ENCODE measurements at regions of chr2 and their contacts with region 1.

Region 1: DNA sequence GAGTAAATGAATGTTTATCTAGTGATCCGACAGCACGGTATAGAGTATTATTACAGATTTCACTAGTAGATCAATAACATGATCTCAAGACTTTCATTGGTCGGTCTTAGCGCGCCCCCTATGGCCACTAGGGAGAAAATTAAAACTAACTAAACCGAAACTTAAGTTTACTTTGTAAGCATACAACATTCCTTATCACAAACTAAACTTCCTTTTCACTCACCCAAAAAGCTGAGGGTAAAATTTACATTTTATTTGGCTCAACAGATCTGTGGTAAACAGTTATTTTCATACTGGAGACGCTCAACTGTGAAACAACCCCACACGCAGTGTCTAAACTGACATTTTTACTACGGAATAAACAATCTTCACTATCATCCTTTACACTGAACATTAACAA is 215.6 kb upstream of the MAP2 start:
- DNase-seq: peak; percentile 44 to 45
- H3K4me3 ChIP-seq: no peak overlapping the region
- H3K4me3 Mint-ChIP-seq: no peak overlapping the region
- H3K27ac Mint-ChIP-seq: no peak overlapping the region
- H3K4me1 ChIP-seq: no peaks in the 10 kb centered on the region
- H3K4me1 Mint-ChIP-seq: no peaks in the 10 kb centered on the region
- H3K27me3 ChIP-seq: no peaks in the 10 kb centered on the region
- H3K27me3 Mint-ChIP-seq: peaks cover 3% of the 10 kb centered on the region
- CTCF ChIP-seq: peak; percentile 57 to 65

Region 2: GRCh38 chr2:208373460-208374089 is 834.6 kb before region 1 on chr2:
- CTCF ChIA-PET with region 1: no interaction called
- POLR2A ChIA-PET with region 1: no interaction called
- intact Hi-C with region 1: loop called (anchors 1 kb)
- DNase-seq: peak in 1 of 2 experiments; percentile 55
- H3K4me3 ChIP-seq: no peak overlapping the region
- H3K4me3 Mint-ChIP-seq: no peak overlapping the region
- H3K27ac Mint-ChIP-seq: no peak overlapping the region
- H3K4me1 ChIP-seq: no peaks in the 10 kb centered on the region
- H3K4me1 Mint-ChIP-seq: no peaks in the 10 kb centered on the region
- H3K27me3 ChIP-seq: no peaks in the 10 kb centered on the region
- H3K27me3 Mint-ChIP-seq: no peaks in the 10 kb centered on the region
- CTCF ChIP-seq: peak; percentile 81

Region 3: DNA sequence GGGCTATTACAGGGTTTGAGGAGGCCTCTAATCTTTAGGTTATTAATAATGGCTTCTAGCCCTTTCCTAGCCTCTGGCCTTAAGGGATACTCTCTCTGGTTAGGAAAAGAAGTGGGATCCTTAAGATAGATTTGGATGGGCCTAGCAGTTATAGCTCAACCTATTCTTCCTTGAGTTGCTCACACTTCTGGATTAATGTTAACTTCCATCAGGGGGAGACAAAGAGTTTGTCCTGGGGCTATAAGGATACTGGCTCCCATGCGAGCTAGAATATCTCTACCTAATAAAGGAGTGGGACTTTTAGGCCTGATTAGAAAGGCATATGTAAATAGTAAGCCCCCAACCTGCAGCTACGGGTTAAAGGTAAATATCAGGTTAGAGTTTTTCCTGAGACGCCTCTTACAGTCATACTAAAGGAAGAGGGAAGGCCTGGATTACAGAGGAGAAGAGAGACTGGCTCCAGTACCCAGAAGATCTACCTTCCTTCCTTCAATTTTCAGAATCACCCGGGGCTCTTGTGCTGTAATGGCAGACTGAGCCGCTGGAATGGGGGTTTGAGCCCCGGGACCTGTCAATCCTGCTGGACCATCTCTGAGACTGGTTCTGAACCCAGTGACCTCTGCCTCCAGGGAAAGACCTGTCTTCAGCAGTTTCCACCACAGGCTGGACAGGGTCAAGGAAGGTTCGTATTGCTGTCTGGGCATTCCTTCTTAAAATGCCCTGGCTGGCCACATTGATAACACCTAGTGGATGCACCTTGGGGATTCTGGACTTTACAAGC is 815.7 kb before region 1 on chr2:
- CTCF ChIA-PET with region 1: no interaction called
- POLR2A ChIA-PET with region 1: no interaction called
- intact Hi-C with region 1: loop called (anchors 1 kb)
- DNase-seq: no peak
- H3K4me3 ChIP-seq: no peak overlapping the region
- H3K4me3 Mint-ChIP-seq: no peak overlapping the region
- H3K27ac Mint-ChIP-seq: no peak overlapping the region
- H3K4me1 ChIP-seq: no peaks in the 10 kb centered on the region
- H3K4me1 Mint-ChIP-seq: no peaks in the 10 kb centered on the region
- H3K27me3 ChIP-seq: no peaks in the 10 kb centered on the region
- H3K27me3 Mint-ChIP-seq: peaks cover 3% of the 10 kb centered on the region
- CTCF ChIP-seq: no peak

Region 4: GRCh38 chr2:208407667-208408066 is 800.5 kb before region 1 on chr2:
- CTCF ChIA-PET with region 1: no interaction called
- POLR2A ChIA-PET with region 1: no interaction called
- intact Hi-C with region 1: loop called (anchors 1 kb)
- DNase-seq: peak in 1 of 2 experiments; percentile 32
- H3K4me3 ChIP-seq: no peak overlapping the region
- H3K4me3 Mint-ChIP-seq: no peak overlapping the region
- H3K27ac Mint-ChIP-seq: no peak overlapping the region
- H3K4me1 ChIP-seq: no peaks in the 10 kb centered on the region
- H3K4me1 Mint-ChIP-seq: no peaks in the 10 kb centered on the region
- H3K27me3 ChIP-seq: no peaks in the 10 kb centered on the region
- H3K27me3 Mint-ChIP-seq: peaks cover 4% of the 10 kb centered on the region
- CTCF ChIP-seq: peak; percentile 25

Region 5: GRCh38 chr2:208595386-208596275 is 612.6 kb before region 1 on chr2:
- CTCF ChIA-PET with region 1: no interaction called
- POLR2A ChIA-PET with region 1: no interaction called
- intact Hi-C with region 1: loop called (anchors 1 kb)
- DNase-seq: peak; percentile 72 to 77
- H3K4me3 ChIP-seq: no peak overlapping the region
- H3K4me3 Mint-ChIP-seq: peak overlapping the region; percentile 65
- H3K27ac Mint-ChIP-seq: peak overlapping the region; percentile 92
- H3K4me1 ChIP-seq: peaks cover 22% of the 10 kb centered on the region
- H3K4me1 Mint-ChIP-seq: peaks cover 18% of the 10 kb centered on the region
- H3K27me3 ChIP-seq: no peaks in the 10 kb centered on the region
- H3K27me3 Mint-ChIP-seq: no peaks in the 10 kb centered on the region
- CTCF ChIP-seq: peak; percentile 32 to 51

Region 6: DNA sequence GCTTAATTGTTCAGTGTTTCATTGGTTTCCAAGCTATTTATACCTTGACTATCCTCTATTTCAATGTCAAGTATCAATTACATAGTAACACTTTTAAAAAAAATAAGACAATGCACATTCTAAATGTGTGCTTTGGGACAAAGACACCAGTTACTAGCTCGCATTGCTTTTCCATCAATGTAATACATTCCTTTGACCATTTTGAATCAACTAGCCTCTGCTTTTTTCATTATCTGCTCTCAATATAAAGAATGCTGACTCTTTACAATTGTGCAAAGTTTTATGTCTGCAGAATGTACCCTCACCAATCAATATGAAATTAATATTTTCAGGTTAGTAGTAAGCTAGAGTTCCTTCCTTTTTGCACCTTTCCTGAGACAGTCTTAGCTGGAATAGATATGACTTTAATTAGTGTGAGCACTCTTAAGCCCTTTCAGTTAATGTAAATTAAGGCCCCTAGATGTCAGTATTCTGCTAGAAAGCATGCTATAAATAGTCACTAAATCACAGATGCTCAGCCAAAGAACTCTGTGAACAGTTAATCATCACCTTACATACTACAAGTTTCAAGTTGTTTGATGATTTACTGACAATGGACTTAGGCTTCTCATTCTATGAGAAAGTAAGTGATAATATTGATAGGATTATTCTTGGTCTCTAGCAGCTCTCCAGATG is 388.1 kb before region 1 on chr2:
- CTCF ChIA-PET with region 1: interaction called, 5 read pairs
- POLR2A ChIA-PET with region 1: no interaction called
- intact Hi-C with region 1: loop called (anchors 1 kb)
- DNase-seq: peak in 1 of 2 experiments; percentile 13
- H3K4me3 ChIP-seq: no peak overlapping the region
- H3K4me3 Mint-ChIP-seq: no peak overlapping the region
- H3K27ac Mint-ChIP-seq: no peak overlapping the region
- H3K4me1 ChIP-seq: no peaks in the 10 kb centered on the region
- H3K4me1 Mint-ChIP-seq: no peaks in the 10 kb centered on the region
- H3K27me3 ChIP-seq: no peaks in the 10 kb centered on the region
- H3K27me3 Mint-ChIP-seq: no peaks in the 10 kb centered on the region
- CTCF ChIP-seq: peak; percentile 27 to 39

Region 7: DNA sequence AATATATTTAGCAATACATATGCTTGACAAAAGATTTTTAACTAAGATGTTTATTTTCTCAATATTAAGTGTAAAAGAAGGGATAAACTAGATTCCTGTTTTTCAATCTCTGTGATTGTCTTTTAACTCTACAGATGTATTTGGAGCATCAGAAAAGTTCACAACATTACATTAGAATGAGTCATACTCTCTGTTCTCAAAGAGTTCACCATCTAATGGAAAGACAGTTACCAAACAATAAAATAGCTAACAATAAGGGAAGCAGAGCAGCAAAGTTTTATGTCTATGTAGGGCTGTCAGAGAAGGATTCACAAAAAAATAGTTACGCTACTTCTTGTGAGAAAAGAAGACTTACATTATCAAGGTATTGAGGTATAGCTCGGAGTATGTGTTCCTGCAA is 106.4 kb after region 1 on chr2:
- CTCF ChIA-PET with region 1: no interaction called
- POLR2A ChIA-PET with region 1: no interaction called
- intact Hi-C with region 1: no loop called
- DNase-seq: no peak
- H3K4me3 ChIP-seq: no peak overlapping the region
- H3K4me3 Mint-ChIP-seq: no peak overlapping the region
- H3K27ac Mint-ChIP-seq: no peak overlapping the region
- H3K4me1 ChIP-seq: no peaks in the 10 kb centered on the region
- H3K4me1 Mint-ChIP-seq: no peaks in the 10 kb centered on the region
- H3K27me3 ChIP-seq: no peaks in the 10 kb centered on the region
- H3K27me3 Mint-ChIP-seq: peaks cover 10% of the 10 kb centered on the region
- CTCF ChIP-seq: no peak